Activated naive CD8-positive, alpha-beta T cell treated with anti-CD3 and anti-CD28 coated beads, Interleukin-2, amount 10 ng/mL, durations not matched to agents 7 days and 5 days (primary cell): ENCODE measurements at regions of chr7 and their contacts with region 1.

Region 1: GRCh38 chr7:87933945-87934698 is at the start of gene ADAM22:
- DNase-seq: peak; percentile 86
- ATAC-seq: peak; percentile 98
- H3K4me3 Mint-ChIP-seq: peak within 1 kb of the TSS; percentile 90
- H3K27ac Mint-ChIP-seq: peak within 1 kb of the TSS; percentile 77
- H3K4me1 Mint-ChIP-seq: peaks cover 12% of the 10 kb centered on the region
- H3K27me3 Mint-ChIP-seq: peaks cover 28% of the 10 kb centered on the region
- total RNA-seq, gene ADAM22: 4.6 TPM

Region 2: GRCh38 chr7:87876040-87876868 is 57.9 kb before region 1 on chr7 and contains the starts of genes DBF4 and SLC25A40:
- POLR2A ChIA-PET with region 1: interaction called, 12 read pairs
- DNase-seq: peak; percentile 98
- ATAC-seq: peak; percentile 93
- H3K4me3 Mint-ChIP-seq: peak within 1 kb of the TSS; percentile 86
- H3K27ac Mint-ChIP-seq: peak within 1 kb of the TSS; percentile 95
- H3K4me1 Mint-ChIP-seq: peaks cover 41% of the 10 kb centered on the region
- H3K27me3 Mint-ChIP-seq: no peaks in the 10 kb centered on the region
- total RNA-seq, gene DBF4: 59.5 to 61.2 TPM
- total RNA-seq, gene SLC25A40: 47.6 to 51.6 TPM

Region 3: GRCh38 chr7:87895363-87895762 is 38.8 kb before region 1 on chr7:
- POLR2A ChIA-PET with region 1: no interaction called
- DNase-seq: no peak
- ATAC-seq: no peak
- H3K4me3 Mint-ChIP-seq: no peak overlapping the region
- H3K27ac Mint-ChIP-seq: no peak overlapping the region
- H3K4me1 Mint-ChIP-seq: peaks cover 8% of the 10 kb centered on the region
- H3K27me3 Mint-ChIP-seq: no peaks in the 10 kb centered on the region

Region 4: GRCh38 chr7:87910138-87910537 is 24.0 kb before region 1 on chr7:
- POLR2A ChIA-PET with region 1: no interaction called
- DNase-seq: no peak
- ATAC-seq: no peak
- H3K4me3 Mint-ChIP-seq: no peak overlapping the region
- H3K27ac Mint-ChIP-seq: no peak overlapping the region
- H3K4me1 Mint-ChIP-seq: peaks cover 5% of the 10 kb centered on the region
- H3K27me3 Mint-ChIP-seq: no peaks in the 10 kb centered on the region